Adrenal gland (tissue), 19 donors: ENCODE measurements at regions of chr10 and their contacts with region 1.

Region 1: DNA sequence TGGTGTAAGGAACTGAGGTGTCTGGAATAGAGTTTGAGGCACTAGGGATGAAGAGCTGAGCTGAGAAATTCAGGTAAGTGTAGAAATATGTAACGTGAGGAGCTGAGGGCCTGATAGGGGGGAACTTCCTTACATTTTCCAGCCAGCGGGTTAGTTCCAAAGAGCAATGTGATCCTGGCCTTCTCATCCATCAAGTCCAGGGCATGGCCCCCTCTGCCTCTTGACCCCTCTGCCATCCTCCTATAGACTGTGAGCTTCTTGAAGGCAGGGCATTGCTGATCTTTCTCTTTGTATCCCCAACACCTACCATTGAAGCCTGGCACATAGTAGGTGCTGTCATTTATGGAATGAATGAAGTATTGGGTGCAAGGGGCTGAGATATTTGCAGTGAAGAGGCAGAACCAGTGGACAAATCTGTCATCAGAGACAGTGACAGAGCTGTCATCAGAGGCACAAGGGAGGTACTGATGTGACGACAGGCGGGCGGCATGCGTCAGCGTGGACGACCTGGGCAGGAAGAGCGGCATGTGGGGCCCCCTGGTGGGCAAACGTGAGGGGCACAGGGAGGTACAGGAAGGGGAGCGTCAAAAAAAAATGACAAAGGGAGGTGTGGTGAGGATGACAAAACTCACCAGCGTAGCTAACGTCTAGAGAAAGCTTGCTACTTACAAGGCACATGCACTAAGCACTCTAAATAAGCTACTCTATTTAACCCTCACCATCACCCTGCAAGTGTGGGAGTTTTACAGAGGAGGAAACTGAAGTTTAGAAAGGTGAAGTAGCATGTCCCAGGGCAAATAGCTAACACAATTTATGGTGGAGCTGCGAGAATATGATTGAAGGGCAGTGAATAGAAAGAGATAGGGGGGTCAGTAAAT is 5.2 kb upstream of the CAMK2G start:
- DNase-seq: peak; percentile 84 to 93 (median 89)
- H3K4me3 ChIP-seq: no peak overlapping the region
- H3K27ac ChIP-seq: no peak overlapping the region
- H3K4me1 ChIP-seq: peaks cover 0 to 4% of the 10 kb centered on the region in 2 donors
- H3K27me3 ChIP-seq: no peaks in the 10 kb centered on the region
- CTCF ChIP-seq: peak; percentile 86 to 99 (median 96)
- POLR2A ChIP-seq: no peak

Region 2: GRCh38 chr10:73634421-73634820 is 245.1 kb before region 1 on chr10:
- intact Hi-C with region 1: no loop called
- DNase-seq: no peak
- H3K4me3 ChIP-seq: no peak overlapping the region
- H3K27ac ChIP-seq: no peak overlapping the region
- H3K4me1 ChIP-seq: no peaks in the 10 kb centered on the region
- H3K27me3 ChIP-seq: no peaks in the 10 kb centered on the region
- CTCF ChIP-seq: no peak
- POLR2A ChIP-seq: no peak

Region 3: GRCh38 chr10:73810735-73811465 is 68.6 kb before region 1 on chr10:
- intact Hi-C with region 1: loop called in 1 of 2 experiments (anchors 10 kb)
- DNase-seq: peak in 5 of 7 donors; percentile 41 to 61 (median 48)
- H3K4me3 ChIP-seq: peak overlapping the region; percentile 39 to 98 (median 86)
- H3K27ac ChIP-seq: peak overlapping the region; percentile 62 to 98 (median 92)
- H3K4me1 ChIP-seq: peaks cover 16 to 36% of the 10 kb centered on the region in 2 donors
- H3K27me3 ChIP-seq: no peaks in the 10 kb centered on the region
- CTCF ChIP-seq: no peak
- POLR2A ChIP-seq: no peak

Region 4: DNA sequence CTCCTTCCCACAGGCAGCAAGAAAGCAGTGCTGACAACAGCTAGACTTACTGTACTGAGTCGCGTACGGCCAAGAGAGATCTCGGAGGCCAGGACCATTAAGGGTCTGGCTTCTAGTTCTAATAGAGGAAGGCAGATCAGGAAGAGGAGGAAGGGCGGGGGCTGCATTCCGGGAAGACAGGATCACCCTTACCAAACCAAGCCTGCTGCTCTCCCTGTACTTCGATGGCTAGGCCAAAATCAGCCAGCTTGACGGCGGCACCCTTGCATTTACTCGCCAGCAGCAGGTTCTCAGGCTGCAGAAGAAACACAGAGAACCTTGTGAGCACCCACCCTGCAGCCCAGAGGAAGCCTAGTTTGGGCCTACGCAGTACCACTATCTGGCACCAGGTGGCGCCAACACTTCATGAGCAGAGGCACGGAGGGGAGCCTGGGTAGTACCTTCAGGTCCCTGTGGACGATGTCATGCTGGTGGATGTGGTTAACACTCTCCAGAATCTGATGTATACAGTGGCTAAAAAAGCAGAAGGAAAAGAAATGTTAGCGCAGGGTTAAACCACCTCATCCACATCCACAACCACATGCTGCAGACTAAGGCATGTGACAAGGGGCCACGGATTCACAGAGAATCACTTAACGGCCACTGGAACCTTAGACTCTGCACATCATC is 30.6 kb before region 1 on chr10:
- intact Hi-C with region 1: loop called (anchors 2 to 5 kb)
- DNase-seq: peak; percentile 69 to 94 (median 83)
- H3K4me3 ChIP-seq: no peak overlapping the region
- H3K27ac ChIP-seq: peak overlapping the region in 1 of 5 donors; percentile 20
- H3K4me1 ChIP-seq: no peaks in the 10 kb centered on the region
- H3K27me3 ChIP-seq: no peaks in the 10 kb centered on the region
- CTCF ChIP-seq: peak; percentile 98 to 100 (median 99)
- POLR2A ChIP-seq: no peak

Region 5: DNA sequence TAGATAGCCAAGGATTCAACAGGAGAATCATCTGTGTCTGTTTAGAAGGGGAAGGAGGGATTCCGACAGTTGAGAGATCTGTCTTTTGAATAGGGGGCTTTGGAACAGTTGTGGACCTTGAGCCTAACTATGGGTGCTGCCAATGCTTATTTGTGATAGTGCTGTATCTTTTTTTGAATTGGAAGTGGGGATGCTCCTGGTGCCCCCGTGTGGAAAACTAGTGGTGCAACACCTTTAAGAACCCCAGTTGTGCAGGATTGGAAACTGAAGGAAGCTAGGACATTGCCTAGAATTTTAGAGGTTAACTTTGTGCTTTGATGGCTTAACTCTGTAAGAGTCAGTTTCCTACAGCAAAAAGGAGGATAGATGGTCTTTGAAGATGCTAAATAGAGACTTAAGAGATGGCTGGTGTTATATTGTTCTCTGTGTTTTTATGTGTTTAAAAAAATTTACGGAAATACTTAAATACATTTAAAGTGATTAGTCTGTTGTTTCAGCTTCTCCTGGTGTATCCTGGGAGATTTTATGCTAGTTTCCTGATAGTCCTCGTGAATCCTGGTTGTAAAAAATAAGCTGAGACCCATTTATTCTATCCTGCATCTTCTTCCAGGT is 201.8 kb after region 1 on chr10:
- intact Hi-C with region 1: loop called in 1 of 2 experiments (anchors 10 kb)
- DNase-seq: peak; percentile 24 to 68 (median 36)
- H3K4me3 ChIP-seq: no peak overlapping the region
- H3K27ac ChIP-seq: no peak overlapping the region
- H3K4me1 ChIP-seq: no peaks in the 10 kb centered on the region
- H3K27me3 ChIP-seq: no peaks in the 10 kb centered on the region
- CTCF ChIP-seq: peak; percentile 33 to 74 (median 66)
- POLR2A ChIP-seq: no peak